ENCODE measurements at regions of chr6 and their contacts with region 1.

Region 1: GRCh38 chr6:72861935-72862432 is 240.1 kb downstream of the KCNQ5 start:
- DNase-seq: peak; percentile 44 to 66
- ATAC-seq: peak; percentile 76 to 87 (median 80)
- H3K4me3 ChIP-seq: no peak overlapping the region
- H3K27ac ChIP-seq: peak overlapping the region; percentile 86
- H3K4me1 ChIP-seq: peaks cover 58% of the 10 kb centered on the region
- H3K27me3 ChIP-seq: no peaks in the 10 kb centered on the region
- CTCF ChIP-seq: no peak

Region 2: DNA sequence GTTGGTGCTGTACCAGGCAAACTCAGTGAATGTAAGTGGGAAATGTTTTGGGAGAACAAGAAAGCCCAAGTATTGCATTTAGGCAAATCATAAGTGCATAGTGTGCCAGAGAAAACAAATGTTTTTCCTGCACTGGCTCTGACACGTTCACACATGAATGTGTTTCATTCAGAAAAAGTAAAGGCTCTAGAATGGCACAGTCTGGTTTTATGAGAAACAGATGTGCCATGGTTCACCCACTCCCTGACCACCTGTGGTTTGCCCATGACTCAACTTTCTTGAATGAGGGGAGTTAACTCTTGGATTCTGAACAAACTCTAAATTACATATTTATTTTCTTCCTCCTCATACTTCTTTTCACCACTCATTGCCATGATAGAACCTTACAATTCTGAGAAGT is 113.2 kb before region 1 on chr6:
- intact Hi-C with region 1: loop called in 1 of 2 experiments (anchors 1 kb)
- DNase-seq: no peak
- ATAC-seq: no peak
- H3K4me3 ChIP-seq: no peak overlapping the region
- H3K27ac ChIP-seq: peak overlapping the region; percentile 3
- H3K4me1 ChIP-seq: peaks cover 25% of the 10 kb centered on the region
- H3K27me3 ChIP-seq: no peaks in the 10 kb centered on the region
- CTCF ChIP-seq: no peak

Region 3: GRCh38 chr6:72787391-72788031 is 74.5 kb before region 1 on chr6:
- intact Hi-C with region 1: no loop called
- DNase-seq: peak; percentile 18 to 55
- ATAC-seq: peak; percentile 90 to 97 (median 96)
- H3K4me3 ChIP-seq: no peak overlapping the region
- H3K27ac ChIP-seq: peak overlapping the region; percentile 54
- H3K4me1 ChIP-seq: peaks cover 23% of the 10 kb centered on the region
- H3K27me3 ChIP-seq: no peaks in the 10 kb centered on the region
- CTCF ChIP-seq: no peak

Region 4: GRCh38 chr6:72905705-72906478 is 43.9 kb after region 1 on chr6:
- intact Hi-C with region 1: loop called in 1 of 2 experiments (anchors 5 kb)
- DNase-seq: no peak
- ATAC-seq: peak in 1 of 4 donors; percentile 13
- H3K4me3 ChIP-seq: no peak overlapping the region
- H3K27ac ChIP-seq: no peak overlapping the region
- H3K4me1 ChIP-seq: peaks cover 8% of the 10 kb centered on the region
- H3K27me3 ChIP-seq: no peaks in the 10 kb centered on the region
- CTCF ChIP-seq: no peak

Region 5: DNA sequence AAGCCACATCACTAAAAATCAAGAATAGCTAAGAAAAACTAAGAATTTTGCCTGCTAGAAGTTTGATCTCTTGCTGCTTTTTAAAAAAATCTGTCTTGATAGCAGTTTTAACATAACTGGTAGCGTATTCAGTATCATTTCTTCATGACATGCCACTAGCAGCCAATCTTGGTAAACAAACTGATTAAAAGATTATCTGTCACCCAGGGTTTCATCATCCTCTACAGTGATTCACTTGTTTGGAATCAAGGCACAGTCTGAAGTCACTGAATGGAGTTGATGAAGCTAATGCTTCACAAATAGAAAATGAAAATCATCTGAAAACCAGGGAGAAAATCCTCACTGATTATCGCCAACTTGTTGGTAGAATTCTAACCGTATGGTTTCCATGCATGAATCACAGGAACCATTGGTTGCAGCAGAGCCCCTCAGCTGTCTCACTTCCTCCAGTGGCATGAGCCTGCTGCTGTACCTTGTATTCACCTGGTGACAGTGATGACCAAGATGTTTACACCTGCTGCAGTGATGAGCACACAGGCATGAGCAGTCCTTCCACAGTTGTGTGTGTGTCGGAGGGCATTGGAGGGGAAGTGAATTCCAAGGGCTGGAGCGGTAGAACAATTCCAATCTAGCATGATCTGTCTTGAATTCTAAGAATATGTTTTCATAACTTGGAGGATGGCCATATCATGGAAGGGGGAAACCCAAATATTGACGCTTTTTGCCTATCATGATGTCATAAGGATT is 88.3 kb after region 1 on chr6:
- intact Hi-C with region 1: loop called in 1 of 2 experiments (anchors 5 kb)
- DNase-seq: peak in 1 of 2 donors; percentile 50
- ATAC-seq: peak; percentile 83 to 89 (median 86)
- H3K4me3 ChIP-seq: peak overlapping the region; percentile 19
- H3K27ac ChIP-seq: peak overlapping the region; percentile 92
- H3K4me1 ChIP-seq: peaks cover 77% of the 10 kb centered on the region
- H3K27me3 ChIP-seq: no peaks in the 10 kb centered on the region
- CTCF ChIP-seq: no peak

Region 6: GRCh38 chr6:73129653-73130443 is 267.9 kb after region 1 on chr6:
- intact Hi-C with region 1: loop called (anchors 5 to 10 kb)
- DNase-seq: peak; percentile 76 to 89
- ATAC-seq: peak; percentile 82 to 93 (median 88)
- H3K4me3 ChIP-seq: peak overlapping the region; percentile 43
- H3K27ac ChIP-seq: peak overlapping the region; percentile 60
- H3K4me1 ChIP-seq: peaks cover 12% of the 10 kb centered on the region
- H3K27me3 ChIP-seq: no peaks in the 10 kb centered on the region
- CTCF ChIP-seq: peak; percentile 91